Activated T-helper 1 cell treated with anti-CD3 and anti-CD28 coated beads, Interleukin-12 subunit alpha, Interleukin-12 subunit beta, Interleukin-2, Interleukin-4 antibody, amounts not matched to agents 30 ng/mL and 10 ng/mL and 1 ng/mL, durations not matched to agents 14 hours and 24 hours and 36 hours (primary cell): ENCODE measurements at regions of chr18 and their contacts with region 1.

Region 1: DNA sequence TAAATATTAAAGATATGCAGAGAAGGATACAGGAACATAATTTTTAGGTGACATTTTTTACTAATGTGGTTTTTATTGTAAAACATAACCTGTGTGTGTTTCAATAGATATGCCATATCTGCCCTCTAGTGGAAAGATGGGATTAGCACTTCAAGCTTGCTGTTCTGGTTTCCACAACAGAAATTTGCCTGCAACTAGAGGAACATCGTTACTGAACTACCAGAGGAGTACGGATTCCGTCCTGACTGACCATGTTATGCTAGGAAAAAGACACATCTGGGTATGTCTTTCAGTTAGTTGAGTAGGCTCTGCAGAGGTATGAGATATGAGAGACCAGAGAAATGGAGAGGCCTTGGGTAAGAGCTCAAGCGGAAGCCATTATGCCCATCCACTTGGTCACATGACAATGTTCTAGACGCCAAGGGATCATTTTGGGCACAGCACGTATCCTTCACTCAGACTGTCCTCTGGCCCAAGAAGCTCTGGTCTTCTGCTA is 104.9 kb downstream of the MBD2 start:
- DNase-seq: peak; percentile 13
- H3K4me3 Mint-ChIP-seq: peak overlapping the region; percentile 57
- H3K27ac Mint-ChIP-seq: peak overlapping the region; percentile 56
- H3K4me1 Mint-ChIP-seq: peaks cover 19% of the 10 kb centered on the region
- H3K27me3 Mint-ChIP-seq: peaks cover 4% of the 10 kb centered on the region

Region 2: DNA sequence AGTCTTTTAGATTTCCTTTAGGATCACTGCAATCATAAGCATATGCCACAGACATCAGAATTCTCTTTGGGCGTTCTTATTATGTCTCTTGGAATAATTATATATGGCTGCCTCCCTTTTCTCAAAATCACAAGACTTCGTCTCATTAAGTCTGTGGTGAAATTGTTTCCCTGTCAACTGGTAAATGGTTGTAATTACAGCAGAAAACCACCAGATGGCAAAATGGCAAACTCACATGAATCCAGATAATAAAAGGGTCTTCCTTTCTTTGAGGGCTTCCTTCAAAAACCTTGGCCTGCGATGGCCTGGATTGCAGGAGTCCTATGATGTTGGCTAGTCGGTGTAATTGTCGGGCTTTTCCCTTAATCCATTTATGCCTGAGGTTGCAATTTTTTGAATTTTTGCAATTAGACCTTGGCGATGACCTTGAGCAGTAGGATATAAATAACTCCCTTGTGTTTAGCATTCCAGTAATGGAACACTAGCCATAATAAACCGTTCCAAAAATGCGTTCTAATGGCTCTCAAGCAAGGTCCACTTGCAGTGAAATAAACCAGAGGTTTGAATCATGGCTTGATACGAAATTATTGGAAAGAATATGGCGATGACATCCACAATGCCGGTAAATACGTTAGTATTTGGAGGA is 551.5 kb before region 1 on chr18:
- intact Hi-C with region 1: loop called (anchors 1 kb)
- DNase-seq: no peak
- H3K4me3 Mint-ChIP-seq: no peak overlapping the region
- H3K27ac Mint-ChIP-seq: no peak overlapping the region
- H3K4me1 Mint-ChIP-seq: no peaks in the 10 kb centered on the region
- H3K27me3 Mint-ChIP-seq: no peaks in the 10 kb centered on the region

Region 3: DNA sequence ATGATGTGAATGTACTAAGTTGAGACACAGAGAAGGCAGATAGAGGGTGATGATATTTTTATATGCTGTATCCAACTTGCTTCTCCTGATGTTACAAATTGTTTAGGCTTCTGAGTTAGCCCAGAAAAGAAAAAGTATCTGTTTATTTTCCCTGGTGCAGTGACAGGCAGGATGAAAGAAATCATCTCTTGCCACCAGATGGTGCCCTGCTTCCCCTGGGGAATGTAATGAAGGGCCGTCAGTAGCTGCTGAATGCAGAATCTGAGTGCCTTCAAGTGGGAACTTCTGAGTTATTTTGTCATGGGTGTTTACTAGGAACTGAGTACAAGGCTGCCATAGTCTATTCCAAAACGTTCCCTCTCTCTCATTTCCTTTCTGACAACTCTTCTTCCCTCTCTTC is 420.7 kb before region 1 on chr18:
- intact Hi-C with region 1: loop called (anchors 1 kb)
- DNase-seq: no peak
- H3K4me3 Mint-ChIP-seq: no peak overlapping the region
- H3K27ac Mint-ChIP-seq: no peak overlapping the region
- H3K4me1 Mint-ChIP-seq: no peaks in the 10 kb centered on the region
- H3K27me3 Mint-ChIP-seq: no peaks in the 10 kb centered on the region

Region 4: DNA sequence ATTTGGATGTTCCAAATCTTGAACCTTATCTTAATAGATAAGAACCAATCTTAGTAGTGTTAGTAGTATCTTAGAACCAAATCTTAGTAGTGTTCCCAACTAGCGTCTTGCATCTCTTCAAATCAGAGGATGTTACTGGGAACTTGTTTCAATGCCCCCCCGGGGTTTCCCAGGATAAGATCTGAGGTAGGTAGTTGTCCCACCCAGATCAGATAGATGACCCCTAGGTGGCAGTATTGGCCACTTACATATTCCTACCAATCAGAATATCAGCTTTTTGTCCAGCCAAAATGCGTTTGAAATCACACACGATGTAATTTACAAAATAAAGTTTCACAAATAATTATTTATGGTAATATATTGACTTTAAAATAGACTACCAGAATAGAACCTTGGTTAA is 209.9 kb before region 1 on chr18:
- intact Hi-C with region 1: loop called (anchors 1 kb)
- DNase-seq: no peak
- H3K4me3 Mint-ChIP-seq: no peak overlapping the region
- H3K27ac Mint-ChIP-seq: no peak overlapping the region
- H3K4me1 Mint-ChIP-seq: no peaks in the 10 kb centered on the region
- H3K27me3 Mint-ChIP-seq: peaks cover 5% of the 10 kb centered on the region